ENCODE measurements at regions of chr3 and their contacts with region 1.

Region 1: DNA sequence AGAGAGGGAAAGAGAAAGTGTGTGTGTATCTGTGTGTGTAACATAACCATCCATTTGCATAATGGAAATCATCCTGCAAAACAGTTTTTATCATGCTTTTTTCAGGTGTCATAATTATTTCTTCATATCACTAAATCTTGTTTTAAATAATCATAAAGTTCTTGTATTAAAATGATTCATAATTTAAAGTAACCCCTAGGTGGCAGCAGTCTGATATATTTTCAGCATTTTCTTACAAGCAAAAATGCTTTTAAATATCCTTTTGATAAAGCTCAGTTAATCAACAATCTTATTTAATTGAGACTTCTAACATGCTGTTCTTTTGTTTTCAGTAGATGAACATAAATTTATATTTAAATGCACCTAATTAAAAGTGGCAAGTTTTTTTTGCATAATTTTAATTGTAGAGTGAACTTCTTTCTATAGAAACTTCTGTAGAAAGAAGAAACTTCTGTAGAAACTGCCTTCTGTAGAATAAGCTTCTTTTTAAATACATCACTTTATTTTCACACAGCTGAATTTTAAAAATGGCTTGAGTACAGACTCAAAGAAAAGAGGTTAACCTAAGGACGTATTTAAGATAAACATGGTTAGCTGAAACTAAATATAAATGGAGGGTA is 72.5 kb downstream of the OPA1 start:
- DNase-seq: no peak
- ATAC-seq: no peak
- H3K4me3 ChIP-seq: no peak overlapping the region
- H3K27ac ChIP-seq: no peak overlapping the region
- H3K4me1 ChIP-seq: no peaks in the 10 kb centered on the region
- H3K27me3 ChIP-seq: no peaks in the 10 kb centered on the region
- CTCF ChIP-seq: peak; percentile 35 to 54 (median 46)
- POLR2A ChIP-seq: no peak

Region 2: GRCh38 chr3:193407112-193407511 is 258.4 kb before region 1 on chr3:
- intact Hi-C with region 1: no loop called
- DNase-seq: no peak
- ATAC-seq: no peak
- H3K4me3 ChIP-seq: no peak overlapping the region
- H3K27ac ChIP-seq: no peak overlapping the region
- H3K4me1 ChIP-seq: no peaks in the 10 kb centered on the region
- H3K27me3 ChIP-seq: no peaks in the 10 kb centered on the region
- CTCF ChIP-seq: no peak
- POLR2A ChIP-seq: no peak

Region 3: GRCh38 chr3:193788189-193788991 is 122.9 kb after region 1 on chr3:
- intact Hi-C with region 1: no loop called
- DNase-seq: peak; percentile 64 to 77 (median 76)
- ATAC-seq: peak; percentile 88
- H3K4me3 ChIP-seq: no peak overlapping the region
- H3K27ac ChIP-seq: no peak overlapping the region
- H3K4me1 ChIP-seq: peaks cover 45% of the 10 kb centered on the region
- H3K27me3 ChIP-seq: no peaks in the 10 kb centered on the region
- CTCF ChIP-seq: peak; percentile 67 to 88 (median 81)
- POLR2A ChIP-seq: no peak

Region 4: GRCh38 chr3:194333212-194333980 is 667.9 kb after region 1 on chr3:
- intact Hi-C with region 1: loop called (anchors 10 kb)
- DNase-seq: peak; percentile 84 to 90 (median 86)
- ATAC-seq: peak; percentile 91
- H3K4me3 ChIP-seq: peak overlapping the region in 1 of 2 donors; percentile 0
- H3K27ac ChIP-seq: no peak overlapping the region
- H3K4me1 ChIP-seq: peaks cover 23% of the 10 kb centered on the region
- H3K27me3 ChIP-seq: peaks cover 0 to 5% of the 10 kb centered on the region in 2 donors
- CTCF ChIP-seq: peak; percentile 95 to 99 (median 97)
- POLR2A ChIP-seq: no peak